ENCODE measurements at regions of chr6 and their contacts with region 1.

Region 1: GRCh38 chr6:105992315-105992961 is 93.7 kb upstream of the PRDM1 start:
- DNase-seq: peak; percentile 83
- ATAC-seq: peak; percentile 76
- H3K4me3 Mint-ChIP-seq: peak overlapping the region; percentile 84
- H3K27ac Mint-ChIP-seq: no peak overlapping the region
- H3K4me1 Mint-ChIP-seq: peaks cover 39% of the 10 kb centered on the region
- H3K27me3 Mint-ChIP-seq: peaks cover 100% of the 10 kb centered on the region
- CTCF ChIP-seq: no peak

Region 2: DNA sequence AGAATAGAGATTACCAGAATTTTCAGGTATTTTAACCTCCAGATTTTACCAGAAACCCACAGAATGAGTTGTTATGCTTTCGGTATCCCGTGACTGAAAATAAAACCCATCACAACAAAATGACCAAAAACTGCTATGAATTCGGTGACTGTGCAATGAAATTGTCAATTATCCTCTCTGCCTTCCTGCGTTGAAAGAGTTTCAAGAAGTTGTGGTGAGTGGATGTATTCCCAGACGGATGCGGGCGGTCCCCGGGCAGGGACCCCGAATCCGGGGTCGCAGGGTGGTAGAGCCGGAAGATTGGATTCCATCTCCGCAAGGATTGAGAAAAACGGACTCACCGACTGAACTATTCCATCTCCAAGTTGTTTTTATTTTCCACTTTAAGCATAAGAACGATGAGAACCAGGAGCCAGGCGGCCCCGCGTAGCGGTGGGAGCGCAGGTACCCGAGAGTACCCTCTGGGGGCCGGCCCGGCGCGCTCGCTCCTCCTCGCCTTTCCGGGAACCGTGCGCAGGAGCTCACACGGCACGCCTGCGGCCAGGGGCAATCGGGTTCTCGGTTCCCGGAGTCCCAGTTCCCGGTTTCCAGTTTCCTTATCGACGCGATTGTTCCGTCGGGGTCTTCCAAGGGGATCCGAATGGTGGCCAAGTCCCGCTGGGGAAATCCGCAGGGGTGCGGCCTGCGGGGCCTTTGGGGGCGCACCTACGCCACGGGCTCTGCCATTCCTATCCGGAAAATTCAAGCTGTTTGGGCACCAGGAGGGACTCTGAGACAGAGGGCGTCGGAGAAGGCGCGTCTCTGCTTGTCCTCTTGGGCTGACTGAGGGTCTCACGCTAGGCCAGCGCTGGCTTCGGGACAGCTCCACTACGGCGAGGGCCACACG is 11.2 kb before region 1 on chr6:
- CTCF ChIA-PET with region 1: interaction called, 16 read pairs
- POLR2A ChIA-PET with region 1: no interaction called
- DNase-seq: peak; percentile 72
- ATAC-seq: peak; percentile 76
- H3K4me3 Mint-ChIP-seq: peak overlapping the region; percentile 71
- H3K27ac Mint-ChIP-seq: no peak overlapping the region
- H3K4me1 Mint-ChIP-seq: peaks cover 16% of the 10 kb centered on the region
- H3K27me3 Mint-ChIP-seq: peaks cover 73% of the 10 kb centered on the region
- CTCF ChIP-seq: no peak

Region 3: GRCh38 chr6:106066989-106067388 is 74.6 kb after region 1 on chr6:
- CTCF ChIA-PET with region 1: no interaction called
- POLR2A ChIA-PET with region 1: no interaction called
- DNase-seq: no peak
- ATAC-seq: no peak
- H3K4me3 Mint-ChIP-seq: no peak overlapping the region
- H3K27ac Mint-ChIP-seq: no peak overlapping the region
- H3K4me1 Mint-ChIP-seq: 0 out of 2 replicates have a peak, but pooled peaks cover 2% of the 10 kb centered on the region
- H3K27me3 Mint-ChIP-seq: no peaks in the 10 kb centered on the region; the same call in 1 of the 2 replicates
- CTCF ChIP-seq: no peak

Region 4: GRCh38 chr6:106085984-106086813 is 93.8 kb after region 1 on chr6 and contains the start of gene PRDM1:
- CTCF ChIA-PET with region 1: interaction called, 26 read pairs
- POLR2A ChIA-PET with region 1: no interaction called
- DNase-seq: peak; percentile 81
- ATAC-seq: peak; percentile 87
- H3K4me3 Mint-ChIP-seq: peak within 1 kb of the TSS; percentile 82
- H3K27ac Mint-ChIP-seq: peak within 1 kb of the TSS; percentile 51; the same call in 1 of the 2 replicates
- H3K4me1 Mint-ChIP-seq: peaks cover 44% of the 10 kb centered on the region
- H3K27me3 Mint-ChIP-seq: peaks cover 28% of the 10 kb centered on the region
- CTCF ChIP-seq: no peak
- total RNA-seq, gene PRDM1: 0.78 to 1.8 TPM (median 1.2 TPM) in 3 replicates

Region 5: GRCh38 chr6:106223300-106223930 is 231.0 kb after region 1 on chr6:
- CTCF ChIA-PET with region 1: interaction called, 10 read pairs
- POLR2A ChIA-PET with region 1: interaction called, 3 read pairs
- DNase-seq: peak; percentile 47
- ATAC-seq: peak; percentile 60
- H3K4me3 Mint-ChIP-seq: no peak overlapping the region
- H3K27ac Mint-ChIP-seq: no peak overlapping the region
- H3K4me1 Mint-ChIP-seq: peaks cover 4% of the 10 kb centered on the region
- H3K27me3 Mint-ChIP-seq: no peaks in the 10 kb centered on the region
- CTCF ChIP-seq: peak; percentile 58

Measured in WTC11 (cell line).